ENCODE measurements at regions of chr17 and their contacts with region 1.

Region 1: GRCh38 chr17:21457051-21458026 is 81.2 kb downstream of the KCNJ12 start:
- DNase-seq: peak; percentile 96
- H3K4me3 Mint-ChIP-seq: no peak overlapping the region
- H3K27ac Mint-ChIP-seq: peak overlapping the region; percentile 53
- H3K4me1 Mint-ChIP-seq: peaks cover 22% of the 10 kb centered on the region
- H3K27me3 Mint-ChIP-seq: peaks cover 8% of the 10 kb centered on the region

Region 2: GRCh38 chr17:21126645-21127510 is 330.5 kb before region 1 on chr17 and contains the start of gene DHRS7B:
- CTCF ChIA-PET with region 1: no interaction called
- intact Hi-C with region 1: loop called (anchors 2 kb)
- DNase-seq: peak; percentile 98
- H3K4me3 Mint-ChIP-seq: peak within 1 kb of the TSS; percentile 95
- H3K27ac Mint-ChIP-seq: peak within 1 kb of the TSS; percentile 94
- H3K4me1 Mint-ChIP-seq: peaks cover 35% of the 10 kb centered on the region
- H3K27me3 Mint-ChIP-seq: no peaks in the 10 kb centered on the region
- total RNA-seq, gene DHRS7B: 12.0 to 12.1 TPM

Region 3: DNA sequence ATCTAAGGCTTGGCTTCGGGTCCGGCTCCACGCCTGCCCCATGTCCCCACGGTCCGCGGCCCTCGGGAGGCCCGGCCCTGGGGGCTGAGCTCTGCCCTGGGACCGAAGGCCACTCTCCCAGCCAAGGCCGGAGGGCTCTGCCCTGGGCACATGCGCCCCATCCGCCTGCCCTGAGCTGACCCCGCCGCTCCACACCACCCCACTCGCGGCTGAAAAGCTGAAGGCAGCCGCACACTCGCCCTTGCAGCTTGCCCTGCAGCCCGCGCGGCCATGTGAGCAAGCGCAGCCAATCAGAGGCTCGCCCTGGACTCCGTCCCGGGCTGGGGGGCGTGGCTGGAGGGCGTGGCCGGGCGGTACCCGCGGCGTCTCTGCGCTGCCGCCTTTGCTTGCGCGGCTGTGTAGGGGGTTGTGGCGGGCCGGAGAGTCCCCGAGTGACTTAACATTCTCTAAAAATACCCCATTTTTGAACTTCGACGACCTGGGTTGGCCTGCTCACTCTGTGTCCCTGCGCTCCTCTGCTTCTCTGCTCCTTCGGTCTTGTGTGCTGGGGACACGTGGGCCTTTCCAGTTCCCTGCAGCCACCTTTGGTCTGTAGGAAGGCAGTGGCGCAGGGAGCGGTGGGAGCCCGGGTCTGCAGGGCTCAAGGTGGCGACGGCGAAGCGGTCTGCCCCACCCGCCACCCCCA is 181.6 kb before region 1 on chr17:
- CTCF ChIA-PET with region 1: interaction called, 11 read pairs
- intact Hi-C with region 1: no loop called
- DNase-seq: peak; percentile 96
- H3K4me3 Mint-ChIP-seq: peak overlapping the region; percentile 78
- H3K27ac Mint-ChIP-seq: peak overlapping the region; percentile 77
- H3K4me1 Mint-ChIP-seq: peaks cover 42% of the 10 kb centered on the region
- H3K27me3 Mint-ChIP-seq: no peaks in the 10 kb centered on the region

Region 4: DNA sequence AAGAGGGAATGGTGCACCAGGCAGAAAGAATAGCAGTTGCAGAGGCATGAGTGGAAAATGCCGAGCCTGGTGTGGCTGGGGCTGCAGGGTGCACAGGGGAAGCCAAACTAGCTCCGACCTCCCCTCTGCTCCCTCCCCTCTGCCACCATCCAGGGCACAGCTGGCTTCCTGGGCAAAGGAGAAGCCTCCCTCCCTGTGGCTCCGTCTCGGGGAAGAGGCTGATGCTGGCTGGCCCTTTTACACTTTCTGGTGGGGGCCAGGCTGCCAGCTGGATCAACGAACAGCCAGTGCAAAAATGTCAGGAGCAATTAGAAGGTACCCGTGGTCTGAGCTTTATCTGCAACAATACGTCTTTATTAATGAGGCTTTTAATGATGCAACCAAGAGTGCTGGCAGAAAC is 118.3 kb before region 1 on chr17:
- CTCF ChIA-PET with region 1: no interaction called
- intact Hi-C with region 1: no loop called
- DNase-seq: no peak
- H3K4me3 Mint-ChIP-seq: no peak overlapping the region
- H3K27ac Mint-ChIP-seq: no peak overlapping the region
- H3K4me1 Mint-ChIP-seq: no peaks in the 10 kb centered on the region
- H3K27me3 Mint-ChIP-seq: no peaks in the 10 kb centered on the region

Region 5: GRCh38 chr17:21370430-21370829 is 86.9 kb before region 1 on chr17:
- CTCF ChIA-PET with region 1: no interaction called
- intact Hi-C with region 1: no loop called
- DNase-seq: no peak
- H3K4me3 Mint-ChIP-seq: no peak overlapping the region
- H3K27ac Mint-ChIP-seq: no peak overlapping the region
- H3K4me1 Mint-ChIP-seq: no peaks in the 10 kb centered on the region
- H3K27me3 Mint-ChIP-seq: peaks cover 7% of the 10 kb centered on the region

Region 6: DNA sequence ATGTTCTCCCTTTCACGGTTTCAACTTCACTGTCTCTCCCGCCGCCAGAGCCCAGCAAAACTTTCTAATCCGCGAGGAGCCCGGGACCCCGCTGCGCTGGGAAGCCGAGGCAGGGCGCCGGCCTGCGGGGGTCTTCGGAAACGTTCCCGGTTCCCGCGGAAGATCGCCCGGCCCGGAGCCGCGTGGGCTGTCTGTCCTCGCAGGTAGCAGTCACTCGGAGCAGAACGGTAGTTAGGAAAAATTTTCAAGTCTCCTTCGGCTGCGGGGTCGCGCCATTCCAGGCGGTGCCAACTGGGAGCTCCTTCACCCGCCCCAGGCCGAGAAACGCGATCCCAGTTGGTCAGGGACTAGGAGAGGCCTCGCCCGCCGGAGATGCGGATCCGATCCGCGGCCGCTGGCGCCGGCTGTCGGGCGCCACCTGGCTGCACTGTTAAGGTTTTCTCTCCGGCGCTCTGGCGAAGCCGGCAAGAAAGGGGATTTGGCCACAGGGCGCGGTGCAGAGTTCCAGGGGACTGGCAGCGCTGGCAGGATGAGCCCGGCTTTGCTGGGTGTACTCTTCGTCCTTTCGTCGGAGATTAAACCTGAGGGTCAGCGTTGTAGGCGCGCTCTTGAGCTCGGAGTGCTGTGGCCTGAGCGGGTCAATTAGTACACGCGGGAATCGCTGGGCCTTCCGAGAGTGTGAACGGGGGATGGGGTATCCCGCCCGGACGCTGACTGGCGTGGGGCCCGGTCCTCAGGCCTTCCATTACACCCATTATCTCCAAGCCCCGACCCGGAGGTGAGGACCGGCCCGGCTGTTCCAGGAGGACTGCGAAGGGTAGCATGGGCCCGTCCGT is 54.2 kb after region 1 on chr17:
- CTCF ChIA-PET with region 1: interaction called, 51 read pairs
- intact Hi-C with region 1: loop called (anchors 1 kb)
- DNase-seq: peak; percentile 73
- H3K4me3 Mint-ChIP-seq: peak overlapping the region; percentile 69
- H3K27ac Mint-ChIP-seq: no peak overlapping the region
- H3K4me1 Mint-ChIP-seq: peaks cover 9% of the 10 kb centered on the region
- H3K27me3 Mint-ChIP-seq: peaks cover 30% of the 10 kb centered on the region

Region 7: DNA sequence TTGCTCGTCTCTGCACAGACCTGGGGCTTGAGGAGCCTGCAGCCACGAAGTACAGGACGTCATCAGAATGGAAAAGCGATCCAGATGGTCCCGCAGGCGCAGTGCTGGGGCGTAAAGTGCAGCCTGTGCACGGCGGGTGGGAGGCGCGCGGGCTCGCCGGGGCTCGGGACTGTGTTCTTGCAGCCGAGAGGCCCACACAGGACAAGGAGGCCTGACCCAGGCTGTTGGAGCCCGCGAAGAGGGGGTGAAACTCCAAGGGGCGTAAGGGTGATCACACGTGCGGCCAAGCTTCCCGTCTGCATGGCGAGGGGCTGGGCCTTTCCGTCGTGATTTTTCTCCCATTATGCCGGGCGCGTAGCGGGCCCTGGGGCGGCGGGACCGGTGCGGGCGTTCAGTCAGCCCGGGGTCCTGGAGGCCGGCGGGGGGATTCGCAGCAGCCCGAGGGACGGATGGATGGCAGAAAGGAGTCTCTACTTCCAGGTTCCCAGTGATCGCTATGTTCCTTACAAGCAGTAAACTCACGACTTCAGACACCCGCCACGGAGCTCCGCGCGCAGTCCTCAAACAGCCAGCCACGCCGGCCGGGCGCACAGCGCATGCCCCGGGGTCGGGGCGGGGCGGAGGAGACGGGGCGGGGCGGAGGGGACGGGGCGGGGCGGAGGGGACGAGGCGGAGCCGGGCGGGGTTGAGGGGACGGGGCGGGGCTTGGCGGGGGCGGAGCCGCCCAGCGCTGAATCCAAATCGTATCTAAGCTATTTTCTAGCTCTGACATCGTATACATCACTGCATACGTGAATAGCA is 93.9 kb after region 1 on chr17:
- CTCF ChIA-PET with region 1: no interaction called
- intact Hi-C with region 1: loop called (anchors 1 kb)
- DNase-seq: peak; percentile 79
- H3K4me3 Mint-ChIP-seq: peak overlapping the region; percentile 91
- H3K27ac Mint-ChIP-seq: peak overlapping the region; percentile 88
- H3K4me1 Mint-ChIP-seq: peaks cover 29% of the 10 kb centered on the region
- H3K27me3 Mint-ChIP-seq: peaks cover 11% of the 10 kb centered on the region

Region 8: DNA sequence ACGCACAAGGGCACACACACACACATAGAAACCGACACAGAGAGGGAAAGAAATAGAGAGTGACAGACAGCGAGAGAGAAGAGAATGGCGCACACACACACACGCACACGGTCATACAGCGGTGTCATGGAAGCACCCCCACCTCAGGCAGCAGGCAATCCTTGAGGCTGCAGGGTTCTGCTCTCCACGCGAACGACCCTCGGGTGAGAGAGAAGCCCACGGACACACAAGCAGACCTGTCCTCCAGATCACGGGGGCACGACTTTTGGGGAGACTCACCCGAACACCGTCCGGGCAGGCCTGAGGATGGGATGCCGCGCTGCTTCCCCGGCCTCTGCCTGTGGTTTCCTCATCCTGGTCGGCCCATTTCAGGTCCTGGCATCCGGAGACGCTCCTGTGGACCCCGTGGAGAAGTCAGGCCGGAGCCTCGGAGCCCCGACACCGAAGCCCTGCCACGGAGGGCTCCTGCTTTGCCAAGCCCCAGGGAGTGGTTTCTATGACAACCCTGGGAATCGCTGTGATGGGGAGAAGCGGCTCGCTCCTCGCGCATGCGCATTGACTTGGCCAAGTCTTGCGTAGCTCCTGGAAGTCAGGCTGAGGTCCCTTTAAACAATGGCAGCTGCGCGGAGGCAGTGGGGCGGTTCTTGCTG is 116.7 kb after region 1 on chr17:
- CTCF ChIA-PET with region 1: no interaction called
- intact Hi-C with region 1: no loop called
- DNase-seq: peak; percentile 56
- H3K4me3 Mint-ChIP-seq: peak overlapping the region; percentile 62
- H3K27ac Mint-ChIP-seq: no peak overlapping the region
- H3K4me1 Mint-ChIP-seq: peaks cover 10% of the 10 kb centered on the region
- H3K27me3 Mint-ChIP-seq: peaks cover 8% of the 10 kb centered on the region

Measured in activated naive CD4-positive, alpha-beta T cell treated with anti-CD3 and anti-CD28 coated beads for 36 hours (primary cell).